ENCODE measurements at regions of chr16 and their contacts with region 1.

Region 1: GRCh38 chr16:52469775-52470174 is 77.2 kb downstream of the TOX3 start:
- DNase-seq: no peak

Region 2: GRCh38 chr16:52547004-52547833 is 77.4 kb after region 1 on chr16 and contains the start of gene TOX3:
- intact Hi-C with region 1: loop called (anchors 10 kb)
- DNase-seq: peak in 4 of 10 donors; percentile 20 to 86 (median 68)

Measured in posterior cingulate gyrus (tissue), 11 donors.